ENCODE measurements at regions of chr7 and their contacts with region 1.

Region 1: DNA sequence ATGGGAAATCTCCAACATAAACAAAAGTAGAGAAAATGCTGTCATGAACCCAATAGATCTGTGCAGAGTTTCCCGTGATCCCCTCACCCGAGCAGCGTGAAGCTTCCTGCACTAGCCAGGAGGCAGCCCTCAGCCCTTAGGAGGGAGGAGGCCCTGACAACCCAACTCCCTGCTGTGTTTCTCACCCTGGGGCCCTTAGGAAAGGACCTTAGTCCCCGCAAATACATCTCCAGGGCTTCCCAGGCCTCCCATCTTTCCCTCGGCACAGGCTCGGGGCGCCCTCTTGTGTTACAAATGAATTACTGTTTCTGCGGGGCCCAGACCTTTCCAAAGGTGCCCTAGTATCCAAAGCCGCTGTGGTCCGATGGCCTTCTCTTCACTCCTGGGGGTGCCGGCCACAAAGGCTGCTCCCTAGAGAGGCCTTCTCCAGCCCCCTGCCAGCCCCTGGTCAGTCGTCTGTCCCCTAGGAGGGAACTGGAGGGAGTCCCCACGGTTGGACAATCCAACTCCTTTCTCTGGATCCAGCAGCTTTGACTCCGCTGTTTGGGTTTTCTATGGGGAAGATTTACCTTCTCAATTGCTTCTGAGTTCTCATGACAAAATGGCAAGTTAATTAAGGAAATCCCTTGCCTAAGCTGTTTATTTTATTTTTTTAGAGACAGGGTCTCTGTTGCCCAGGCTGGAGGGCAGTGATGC is 49.9 kb upstream of the SH2B2 start:
- DNase-seq: peak; percentile 85
- CTCF ChIP-seq: peak; percentile 78

Region 2: DNA sequence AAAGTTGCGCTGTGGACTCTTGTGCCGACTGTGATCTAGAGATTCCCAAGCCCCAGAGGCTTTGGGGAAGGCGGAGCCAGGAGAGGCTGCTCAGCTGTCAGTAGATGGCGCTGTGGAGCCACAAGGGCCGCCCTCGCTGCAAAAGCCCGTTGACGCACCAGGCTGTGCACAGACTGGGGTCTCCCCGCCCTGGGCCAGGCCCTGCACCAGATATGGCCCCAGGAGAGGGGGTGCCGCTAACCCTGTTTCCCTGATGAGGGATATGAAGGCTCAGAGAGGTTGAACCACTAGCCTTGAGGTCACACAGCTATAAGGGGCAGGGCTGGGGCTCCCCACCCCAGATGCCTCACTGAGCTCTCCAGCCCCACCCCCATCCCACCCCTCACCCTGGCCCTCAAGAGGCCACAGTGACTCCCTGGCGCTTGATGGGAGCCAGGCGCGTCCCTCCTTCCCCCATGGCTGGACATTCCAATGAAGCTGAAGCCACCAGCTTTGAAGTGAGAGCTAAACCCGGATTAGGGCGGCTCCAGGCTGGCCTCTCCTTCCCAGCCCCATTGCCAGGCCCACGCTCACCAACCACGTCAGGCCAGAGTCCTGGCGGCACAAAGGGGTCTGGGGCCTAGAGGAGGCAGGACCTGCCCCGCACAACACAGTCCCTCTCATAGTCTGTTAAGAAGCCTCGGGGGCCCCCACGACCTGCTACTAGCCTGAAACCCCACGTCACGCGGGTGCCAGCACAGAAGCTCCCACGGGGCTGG is 634.1 kb before region 1 on chr7:
- CTCF ChIA-PET with region 1: interaction called, 16 read pairs
- POLR2A ChIA-PET with region 1: no interaction called
- DNase-seq: peak; percentile 83
- CTCF ChIP-seq: peak; percentile 92

Region 3: GRCh38 chr7:101688183-101688831 is 548.4 kb before region 1 on chr7:
- CTCF ChIA-PET with region 1: interaction called, 11 read pairs
- POLR2A ChIA-PET with region 1: no interaction called
- DNase-seq: peak; percentile 92
- CTCF ChIP-seq: peak; percentile 91

Region 4: DNA sequence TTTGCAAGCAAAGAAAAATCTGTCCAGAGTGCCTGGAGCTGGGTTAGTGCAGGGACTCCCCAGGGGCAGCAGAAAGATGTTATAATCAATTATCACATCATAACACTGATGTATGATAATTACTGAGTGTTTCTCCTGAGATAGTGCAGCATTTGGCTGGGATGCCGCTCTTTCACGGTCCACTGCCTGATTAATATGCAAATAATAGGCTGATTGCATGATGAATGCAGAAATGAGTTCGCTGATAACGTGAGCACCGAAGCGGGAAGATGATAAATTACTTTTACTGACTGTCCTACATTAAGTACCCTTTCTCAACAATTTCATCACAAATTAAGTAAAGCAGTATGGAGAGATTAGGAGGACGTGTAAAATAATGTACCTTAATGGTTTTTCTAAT is 21.5 kb before region 1 on chr7:
- CTCF ChIA-PET with region 1: no interaction called
- POLR2A ChIA-PET with region 1: no interaction called
- DNase-seq: no peak
- CTCF ChIP-seq: no peak

Region 5: DNA sequence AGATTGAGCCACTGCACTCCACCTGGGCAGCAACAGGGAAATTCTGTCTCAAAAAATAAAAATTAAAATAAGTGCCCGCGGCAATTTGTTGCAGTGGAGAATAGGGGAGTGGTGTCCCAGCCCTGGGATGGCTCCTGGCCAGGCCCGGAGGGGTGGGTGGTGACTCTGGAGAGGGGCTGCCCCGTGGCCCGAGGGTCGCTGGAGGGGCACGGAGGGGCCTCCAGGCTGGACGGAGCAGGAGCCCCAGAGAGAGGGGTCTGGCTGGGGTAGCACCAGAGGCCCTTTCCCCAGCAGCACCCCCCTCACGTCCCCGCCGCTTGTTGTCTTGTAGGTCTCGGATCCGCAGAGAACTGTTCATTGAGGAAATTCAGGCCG is 11.3 kb after region 1 on chr7:
- CTCF ChIA-PET with region 1: interaction called, 11 read pairs
- POLR2A ChIA-PET with region 1: no interaction called
- DNase-seq: no peak
- CTCF ChIP-seq: no peak

Measured in GM10248 (cell line).